Heart left ventricle (tissue), 16 donors: ENCODE measurements at regions of chr11 and their contacts with region 1.

Region 1: GRCh38 chr11:68927280-68928135 is 23.8 kb downstream of the IGHMBP2 start:
- DNase-seq: peak in 2 of 5 donors; percentile 23 to 59
- ATAC-seq: peak in 3 of 4 donors; percentile 45 to 54 (median 46)
- H3K4me3 ChIP-seq: no peak overlapping the region
- H3K27ac ChIP-seq: peak overlapping the region in 9 of 12 donors; percentile 6 to 82 (median 58)
- H3K4me1 ChIP-seq: peaks cover 13 to 35% (median 27%) of the 10 kb centered on the region in 12 donors
- H3K27me3 ChIP-seq: no peaks in the 10 kb centered on the region
- CTCF ChIP-seq: no peak
- POLR2A ChIP-seq: no peak

Region 2: GRCh38 chr11:69048718-69049489 is 121.4 kb after region 1 on chr11 and contains the start of gene TPCN2:
- intact Hi-C with region 1: loop called in 8 of 10 experiments (anchors 5 to 10 kb)
- DNase-seq: peak; percentile 93 to 97 (median 96)
- ATAC-seq: peak; percentile 90 to 94 (median 92)
- H3K4me3 ChIP-seq: peak within 1 kb of the TSS; percentile 67 to 100 (median 87)
- H3K27ac ChIP-seq: peak within 1 kb of the TSS; percentile 39 to 98 (median 92)
- H3K4me1 ChIP-seq: peaks cover 0 to 64% (median 49%) of the 10 kb centered on the region in 12 donors
- H3K27me3 ChIP-seq: no peaks in the 10 kb centered on the region
- CTCF ChIP-seq: no peak
- POLR2A ChIP-seq: peak in 1 of 2 donors; percentile 86
- total RNA-seq, gene TPCN2: 4.1 to 17.6 (median 7.5) TPM